Motor neuron (in vitro differentiated cells): ENCODE measurements at regions of chr14 and their contacts with region 1.

Region 1: DNA sequence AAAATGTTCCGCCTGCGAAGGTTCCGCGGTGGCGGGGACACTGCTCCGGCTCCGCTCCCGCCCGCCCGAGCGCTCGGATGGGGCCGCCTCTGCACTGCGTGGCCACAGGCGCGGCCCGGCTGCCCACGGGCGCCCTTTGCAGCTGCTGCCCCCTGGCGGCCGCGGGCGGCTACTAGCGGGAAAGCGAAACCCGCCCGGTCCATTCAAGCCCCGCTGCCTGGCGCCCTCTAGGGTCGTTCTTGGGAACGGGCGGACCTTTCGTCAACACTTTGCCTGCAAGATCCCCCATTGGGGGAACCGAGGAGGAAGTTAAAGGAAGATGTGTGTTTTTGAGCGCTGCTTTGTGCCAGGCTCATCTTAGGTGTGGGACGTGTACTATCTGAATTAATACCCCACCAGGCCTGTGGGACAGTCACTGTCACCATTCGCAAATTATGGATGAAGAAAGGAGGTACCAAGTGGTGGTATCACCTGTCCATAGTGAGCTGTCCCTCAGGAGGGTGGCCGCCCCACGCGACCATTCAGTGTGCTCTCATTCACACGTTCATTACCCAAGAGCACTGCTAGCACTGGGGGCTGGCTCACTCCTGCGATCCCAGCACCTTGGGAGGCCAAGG is 19.4 kb downstream of the GPR132 start:
- ATAC-seq: peak; percentile 78 to 96 (median 94)
- H3K4me3 ChIP-seq: no peak overlapping the region
- H3K27ac ChIP-seq: no peak overlapping the region
- H3K4me1 ChIP-seq: no peaks in the 10 kb centered on the region

Region 2: GRCh38 chr14:104924421-104925213 is 121.2 kb before region 1 on chr14 and contains the start of gene PLD4:
- in situ Hi-C with region 1: loop called in 1 of 9 experiments (anchors 25 kb)
- ATAC-seq: no peak
- H3K4me3 ChIP-seq: no peak within 1 kb of the TSS
- H3K27ac ChIP-seq: no peak within 1 kb of the TSS
- H3K4me1 ChIP-seq: no peaks in the 10 kb centered on the region
- total RNA-seq, gene PLD4: 0.09 to 1.1 (median 0.41) TPM

Region 3: DNA sequence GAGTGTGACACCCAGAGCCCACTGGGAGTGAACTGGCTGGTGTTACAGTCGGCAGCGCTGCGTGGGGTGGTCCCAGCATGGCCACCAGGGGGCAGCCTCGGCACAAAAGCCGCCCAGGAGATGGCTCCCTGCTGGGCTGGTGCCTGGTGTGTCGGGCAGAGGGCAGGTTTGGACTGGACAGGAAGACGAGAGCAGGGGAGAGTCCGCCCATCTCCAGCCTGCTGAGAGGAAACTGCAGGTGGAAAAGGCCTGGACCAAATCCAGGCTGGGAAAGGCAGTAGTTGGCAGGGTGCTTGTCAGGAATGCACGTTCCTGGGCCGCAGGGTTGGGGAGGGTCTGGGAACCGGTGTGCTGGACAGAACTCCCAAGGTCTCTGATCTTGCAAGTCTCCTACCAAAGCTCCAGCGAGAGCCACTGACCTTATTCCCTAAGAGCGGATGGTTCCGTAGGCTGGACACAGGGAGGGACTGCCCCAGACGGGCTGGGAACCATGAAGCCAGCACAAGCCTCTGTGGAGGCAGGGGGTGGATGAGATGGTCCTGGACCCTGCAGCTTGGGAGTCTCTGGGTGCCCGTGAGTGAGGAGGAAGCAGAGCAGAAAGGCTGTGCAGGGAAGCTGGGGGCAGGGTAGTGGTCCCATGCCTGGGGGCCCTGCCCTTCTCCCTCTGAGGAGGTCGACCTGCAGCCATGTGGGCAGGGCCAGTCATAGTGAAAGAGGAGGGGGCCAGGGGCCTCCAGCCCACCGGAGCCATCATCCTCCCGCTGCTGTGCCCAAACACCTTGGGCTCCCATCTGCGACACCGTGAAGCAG is 69.4 kb before region 1 on chr14:
- in situ Hi-C with region 1: loop called in 2 of 9 experiments (anchors 10 kb)
- ATAC-seq: peak; percentile 1 to 67 (median 31)
- H3K4me3 ChIP-seq: no peak overlapping the region
- H3K27ac ChIP-seq: no peak overlapping the region
- H3K4me1 ChIP-seq: peaks cover 8 to 34% of the 10 kb centered on the region in 2 donors

Region 4: GRCh38 chr14:105203057-105203531 is 157.3 kb after region 1 on chr14:
- in situ Hi-C with region 1: no loop called
- ATAC-seq: peak; percentile 63 to 84 (median 82)
- H3K4me3 ChIP-seq: no peak overlapping the region
- H3K27ac ChIP-seq: peak overlapping the region in 1 of 2 donors; percentile 14
- H3K4me1 ChIP-seq: peaks cover 26 to 39% of the 10 kb centered on the region in 2 donors

Region 5: DNA sequence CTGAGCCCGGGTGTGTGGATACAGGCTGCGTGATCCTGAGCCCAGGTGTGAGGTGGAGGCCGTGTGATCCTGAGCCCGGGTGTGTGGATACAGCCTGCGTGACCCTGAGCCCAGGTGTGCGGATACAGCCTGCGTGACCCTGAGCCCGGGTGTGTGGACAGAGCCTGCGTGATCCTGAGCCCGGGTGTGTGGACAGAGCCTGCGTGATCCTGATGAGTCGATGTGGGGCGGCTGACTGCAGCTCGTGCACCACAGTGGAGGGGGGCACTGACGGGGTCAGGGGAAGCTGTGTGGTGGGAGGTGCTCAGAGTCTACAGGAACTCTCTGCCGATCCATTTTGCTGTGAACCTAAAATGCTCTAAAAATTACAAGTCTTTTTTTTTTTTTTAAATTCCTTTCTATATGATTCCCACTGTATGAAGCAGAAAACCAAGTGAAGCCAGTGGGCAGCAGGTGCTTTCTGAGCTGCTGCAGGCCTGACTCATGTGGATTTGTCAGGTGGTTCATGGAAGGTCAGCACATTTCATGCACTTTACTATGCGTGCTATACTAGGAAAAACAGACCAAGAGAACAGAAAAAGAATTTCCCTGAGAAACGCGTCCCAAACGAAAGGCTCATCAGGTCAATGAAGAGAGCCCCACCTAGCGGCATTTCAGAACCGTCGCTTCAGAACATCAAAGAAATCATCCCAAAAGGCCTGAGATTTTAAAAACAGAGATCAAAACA is 235.7 kb after region 1 on chr14:
- in situ Hi-C with region 1: no loop called
- ATAC-seq: peak; percentile 63 to 97 (median 92)
- H3K4me3 ChIP-seq: no peak overlapping the region
- H3K27ac ChIP-seq: no peak overlapping the region
- H3K4me1 ChIP-seq: peaks cover 4 to 7% of the 10 kb centered on the region in 2 donors